ENCODE measurements at regions of chr12 and their contacts with region 1.

Region 1: DNA sequence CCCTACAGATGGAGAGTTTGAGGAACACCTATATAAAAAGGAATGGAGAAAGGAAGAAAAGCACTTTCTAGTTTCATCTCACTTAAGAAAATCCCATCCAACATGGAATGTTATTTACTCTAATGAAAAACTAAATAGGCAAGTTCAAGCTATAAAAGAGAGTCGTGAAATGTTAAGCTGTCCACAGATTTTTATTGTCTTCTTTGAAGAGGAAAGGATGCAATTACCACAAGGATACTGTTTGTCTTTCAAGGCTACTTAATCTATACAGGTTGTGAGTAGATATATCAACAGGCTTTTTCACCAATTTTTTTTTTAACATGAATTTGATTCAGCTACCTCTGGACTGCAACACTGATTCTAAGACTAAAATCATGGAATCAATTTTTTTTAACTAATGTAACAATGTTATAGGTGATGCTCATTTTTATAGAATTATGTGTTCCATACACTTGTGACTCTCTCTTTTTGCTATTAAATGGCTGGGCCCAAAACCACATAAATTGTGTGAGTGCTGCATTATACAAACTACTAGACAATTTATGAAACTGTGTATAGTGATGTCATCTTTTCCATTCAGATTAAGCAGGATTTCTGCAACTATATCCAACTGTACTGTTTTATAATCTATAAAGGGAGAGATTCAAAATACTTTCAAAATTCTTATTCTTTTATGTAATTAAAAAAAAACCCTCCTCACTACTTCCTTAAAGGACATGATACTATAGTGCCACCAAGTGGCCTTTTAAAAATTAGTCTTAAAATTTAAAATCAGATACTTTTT is 26.8 kb upstream of the BMAL2 start:
- DNase-seq: no peak
- ATAC-seq: no peak
- H3K4me3 Mint-ChIP-seq: no peak overlapping the region
- H3K27ac Mint-ChIP-seq: peak overlapping the region; percentile 55; the same call in 1 of the 2 replicates
- H3K4me1 Mint-ChIP-seq: no peaks in the 10 kb centered on the region
- H3K27me3 Mint-ChIP-seq: no peaks in the 10 kb centered on the region
- CTCF ChIP-seq: no peak

Region 2: DNA sequence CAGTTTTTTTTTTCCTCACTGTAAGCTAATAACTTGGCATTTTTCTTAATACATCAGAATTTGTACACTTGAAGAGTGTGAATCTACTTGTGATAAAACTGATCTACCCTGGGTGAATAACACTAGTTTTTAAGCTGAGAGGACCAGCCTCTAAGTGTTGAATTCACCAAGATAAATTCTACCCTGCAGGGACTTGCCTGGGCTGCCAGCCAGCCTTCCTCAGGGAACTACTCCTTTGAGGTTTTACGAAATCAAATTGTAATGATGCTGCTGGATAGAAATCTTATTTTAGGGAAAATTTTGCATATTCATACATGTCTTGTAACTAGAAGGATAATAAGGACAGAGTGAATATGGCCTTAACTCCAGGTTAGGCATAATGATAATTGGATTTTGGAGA is 281.6 kb before region 1 on chr12:
- CTCF ChIA-PET with region 1: interaction called, 20 read pairs
- POLR2A ChIA-PET with region 1: no interaction called
- DNase-seq: no peak
- ATAC-seq: no peak
- H3K4me3 Mint-ChIP-seq: peak overlapping the region; percentile 99
- H3K27ac Mint-ChIP-seq: no peak overlapping the region; the same call in 1 of the 2 replicates
- H3K4me1 Mint-ChIP-seq: peaks cover 22% of the 10 kb centered on the region
- H3K27me3 Mint-ChIP-seq: no peaks in the 10 kb centered on the region
- CTCF ChIP-seq: no peak

Region 3: DNA sequence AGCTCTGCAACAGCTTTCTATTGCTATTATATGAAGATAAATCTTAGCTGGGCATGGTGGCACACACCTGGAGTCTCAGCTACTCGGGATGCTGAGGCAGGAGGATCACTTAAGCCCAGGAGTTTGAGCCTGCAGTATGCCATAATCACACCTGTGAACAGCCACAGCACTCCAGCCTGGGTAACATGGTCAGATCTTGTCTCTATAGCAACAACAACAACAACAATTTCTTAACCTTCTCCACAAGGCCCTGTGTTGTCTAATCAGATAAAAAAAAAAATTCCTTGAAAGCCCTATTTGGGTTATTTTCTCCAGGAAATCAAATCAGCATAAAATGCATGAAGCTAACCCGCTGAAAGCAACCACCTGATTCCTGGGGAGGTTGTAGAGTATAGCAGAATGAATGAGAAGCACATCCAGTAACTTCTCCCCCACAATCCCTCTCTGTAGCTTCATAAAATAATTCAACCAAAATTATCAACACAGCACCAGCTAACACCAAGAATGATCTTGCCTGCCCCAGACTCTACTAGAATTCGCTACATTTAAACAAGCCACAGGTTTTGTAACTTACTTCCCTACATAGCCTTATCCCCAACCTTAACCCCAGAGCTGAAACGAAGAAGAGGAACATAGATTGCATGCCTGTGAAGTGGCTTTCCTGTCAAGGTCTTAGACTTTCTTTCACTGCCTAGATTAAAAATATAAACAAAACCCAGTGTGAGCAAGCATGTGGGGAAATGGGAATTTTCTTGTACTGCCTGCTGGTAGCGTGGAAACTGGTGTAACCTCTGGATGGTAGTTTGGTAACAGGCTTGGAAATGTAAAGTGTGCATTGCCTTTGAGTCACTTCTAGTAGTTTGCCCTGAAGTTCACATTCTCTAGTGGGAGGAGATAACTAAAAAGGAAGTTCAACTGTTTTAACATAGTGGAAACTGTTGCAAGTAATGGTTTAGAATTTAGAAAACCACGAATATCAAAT is 67.8 kb before region 1 on chr12:
- CTCF ChIA-PET with region 1: interaction called, 18 read pairs
- POLR2A ChIA-PET with region 1: no interaction called
- DNase-seq: no peak
- ATAC-seq: no peak
- H3K4me3 Mint-ChIP-seq: no peak overlapping the region
- H3K27ac Mint-ChIP-seq: no peak overlapping the region
- H3K4me1 Mint-ChIP-seq: no peaks in the 10 kb centered on the region; the same call in 1 of the 2 replicates
- H3K27me3 Mint-ChIP-seq: no peaks in the 10 kb centered on the region
- CTCF ChIP-seq: no peak

Region 4: DNA sequence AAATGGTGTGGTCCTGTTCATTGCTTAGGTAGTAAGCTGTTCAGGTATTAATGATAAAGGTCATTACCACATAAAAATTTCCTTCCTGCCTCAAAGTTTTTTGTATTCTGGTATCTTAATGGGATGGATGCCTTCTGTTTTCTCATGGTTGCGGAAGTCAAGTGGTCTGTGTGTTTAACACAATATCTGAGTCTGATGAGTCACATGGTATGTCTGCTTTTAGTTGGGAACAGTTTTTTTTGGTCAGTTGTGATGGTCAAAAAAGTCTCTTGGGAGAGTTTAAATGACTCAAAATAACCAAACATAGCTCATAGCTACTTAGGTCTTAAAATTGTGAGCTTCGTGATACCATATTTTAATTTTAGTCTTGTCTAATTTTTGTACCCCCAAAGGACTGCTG is 21.1 kb before region 1 on chr12:
- CTCF ChIA-PET with region 1: interaction called, 13 read pairs
- POLR2A ChIA-PET with region 1: no interaction called
- DNase-seq: no peak
- ATAC-seq: no peak
- H3K4me3 Mint-ChIP-seq: no peak overlapping the region
- H3K27ac Mint-ChIP-seq: no peak overlapping the region
- H3K4me1 Mint-ChIP-seq: peaks cover 41% of the 10 kb centered on the region
- H3K27me3 Mint-ChIP-seq: no peaks in the 10 kb centered on the region; the same call in 1 of the 2 replicates
- CTCF ChIP-seq: no peak

Region 5: DNA sequence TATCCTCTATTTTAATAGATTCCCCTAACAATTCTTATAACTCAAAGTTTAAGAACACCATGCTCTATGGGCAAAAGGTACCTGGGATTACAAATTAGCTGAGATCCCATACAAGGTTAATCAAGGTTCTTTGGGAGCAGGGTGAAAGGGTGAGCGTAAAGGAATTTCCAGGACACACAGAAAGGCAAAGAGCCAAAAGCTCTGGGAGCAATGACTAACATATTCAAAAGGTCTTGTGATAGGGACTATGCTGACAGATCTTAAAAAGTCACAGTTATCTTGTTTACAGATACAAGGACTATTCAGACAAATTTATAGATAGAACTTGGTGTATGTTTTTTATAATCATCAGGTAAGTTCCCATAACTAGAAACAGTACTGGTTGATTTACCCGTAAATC is 198.6 kb after region 1 on chr12:
- CTCF ChIA-PET with region 1: no interaction called
- POLR2A ChIA-PET with region 1: no interaction called
- DNase-seq: no peak
- ATAC-seq: no peak
- H3K4me3 Mint-ChIP-seq: no peak overlapping the region
- H3K27ac Mint-ChIP-seq: no peak overlapping the region
- H3K4me1 Mint-ChIP-seq: 0 out of 2 replicates have a peak, but pooled peaks cover 3% of the 10 kb centered on the region
- H3K27me3 Mint-ChIP-seq: no peaks in the 10 kb centered on the region; the same call in 1 of the 2 replicates
- CTCF ChIP-seq: no peak

Measured in WTC11 (cell line).